SK-N-SH (cell line): ENCODE measurements at regions of chr11 and their contacts with region 1.

Region 1: DNA sequence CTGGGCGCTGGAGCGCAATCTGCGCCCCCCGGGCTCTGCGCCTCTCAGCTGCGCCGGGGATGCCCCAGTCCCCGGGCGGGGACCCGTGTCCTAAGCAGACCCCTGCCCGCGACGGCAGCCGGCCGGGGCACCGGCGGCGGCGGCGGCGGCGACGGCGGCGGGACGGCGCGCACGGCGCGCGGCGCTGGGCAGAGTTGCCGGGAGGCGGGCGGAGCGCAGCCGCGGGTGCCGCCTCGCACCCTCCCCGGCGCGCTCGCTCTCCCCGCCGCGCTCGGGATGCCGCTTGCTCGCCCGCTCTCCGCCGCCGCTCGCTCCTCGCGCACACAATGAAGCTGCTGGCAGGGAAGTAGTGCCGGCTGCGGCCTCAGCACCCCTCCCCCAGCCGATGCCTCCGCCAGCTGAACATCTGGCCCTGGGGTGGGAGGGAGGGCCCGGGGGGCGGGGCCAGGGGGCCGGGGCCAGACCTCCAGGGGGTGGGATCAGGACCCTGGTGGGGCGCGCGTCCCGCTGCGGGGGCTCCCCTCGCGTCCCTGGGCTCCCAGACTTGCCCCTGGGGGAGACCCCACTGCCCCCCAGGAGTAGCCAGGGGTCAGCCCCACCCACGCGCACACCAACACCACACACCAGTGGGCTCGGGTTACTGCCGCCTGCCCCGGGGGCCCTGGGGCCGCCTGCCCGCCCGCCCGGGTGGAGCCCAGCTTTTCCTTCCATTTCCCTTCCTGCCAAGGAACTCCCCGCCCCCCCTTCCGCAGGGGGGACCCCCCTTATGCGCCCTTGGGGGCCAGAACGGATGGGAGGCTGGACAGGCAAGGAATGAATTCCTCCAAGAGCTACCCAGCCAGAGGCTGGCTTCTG is at the start of gene RCOR2:
- DNase-seq: peak; percentile 98
- H3K4me3 ChIP-seq: peak within 1 kb of the TSS; percentile 58 to 64
- H3K27ac ChIP-seq: peak within 1 kb of the TSS in 1 of 2 experiments; percentile 98; a peak in 2 of 4 replicates
- H3K4me1 ChIP-seq: peaks cover 4 to 44% of the 10 kb centered on the region in 2 experiments; a peak in 3 of 4 replicates
- H3K27me3 ChIP-seq: no peaks in the 10 kb centered on the region
- CTCF ChIP-seq: no peak
- EP300 ChIP-seq: no peak
- RAD21 ChIP-seq: no peak
- polyA plus RNA-seq, gene RCOR2: 1.1 and 1.4 TPM in 2 replicates

Region 2: DNA sequence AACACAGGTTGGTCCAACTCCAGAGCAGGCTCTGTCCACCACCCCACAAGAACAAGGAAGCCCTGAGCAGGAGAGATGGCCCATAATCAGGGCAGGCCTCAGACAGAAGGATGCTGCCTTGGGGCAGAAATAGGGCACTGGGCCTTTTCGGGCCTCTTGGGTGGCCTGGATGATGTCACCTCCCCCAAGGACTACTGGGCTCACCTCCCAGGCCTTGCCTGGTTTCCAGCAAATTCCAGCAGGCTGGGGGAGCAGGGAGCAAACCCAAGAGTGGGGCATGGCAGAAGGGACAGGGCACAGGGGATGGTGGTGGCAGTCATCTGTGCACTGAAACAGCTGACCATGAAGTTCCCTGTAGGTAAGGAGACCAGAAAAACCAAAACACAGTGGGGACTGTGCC is 16.4 kb after region 1 on chr11:
- CTCF ChIA-PET with region 1: interaction called, 14 read pairs
- POLR2A ChIA-PET with region 1: interaction called, 7 read pairs
- DNase-seq: no peak
- H3K4me3 ChIP-seq: no peak overlapping the region
- H3K27ac ChIP-seq: no peak overlapping the region
- H3K4me1 ChIP-seq: peaks cover 3 to 4% of the 10 kb centered on the region in 2 experiments; a peak in 1 of 4 replicates
- H3K27me3 ChIP-seq: no peaks in the 10 kb centered on the region
- CTCF ChIP-seq: no peak
- EP300 ChIP-seq: no peak
- RAD21 ChIP-seq: no peak

Region 3: GRCh38 chr11:63938479-63939396 is 21.7 kb after region 1 on chr11 and contains the start of gene NAA40:
- CTCF ChIA-PET with region 1: interaction called, 113 read pairs
- POLR2A ChIA-PET with region 1: interaction called, 12 read pairs
- DNase-seq: peak; percentile 99
- H3K4me3 ChIP-seq: peak within 1 kb of the TSS; percentile 69 to 79
- H3K27ac ChIP-seq: peak within 1 kb of the TSS; percentile 67 to 82
- H3K4me1 ChIP-seq: peaks cover 12% of the 10 kb centered on the region in 2 experiments; a peak in 2 of 4 replicates
- H3K27me3 ChIP-seq: no peaks in the 10 kb centered on the region
- CTCF ChIP-seq: no peak
- EP300 ChIP-seq: no peak; a peak in 1 of 4 replicates
- RAD21 ChIP-seq: no peak; the same call in 1 of the 2 replicates
- polyA plus RNA-seq, gene NAA40: 33.0 and 36.3 TPM in 2 replicates

Region 4: DNA sequence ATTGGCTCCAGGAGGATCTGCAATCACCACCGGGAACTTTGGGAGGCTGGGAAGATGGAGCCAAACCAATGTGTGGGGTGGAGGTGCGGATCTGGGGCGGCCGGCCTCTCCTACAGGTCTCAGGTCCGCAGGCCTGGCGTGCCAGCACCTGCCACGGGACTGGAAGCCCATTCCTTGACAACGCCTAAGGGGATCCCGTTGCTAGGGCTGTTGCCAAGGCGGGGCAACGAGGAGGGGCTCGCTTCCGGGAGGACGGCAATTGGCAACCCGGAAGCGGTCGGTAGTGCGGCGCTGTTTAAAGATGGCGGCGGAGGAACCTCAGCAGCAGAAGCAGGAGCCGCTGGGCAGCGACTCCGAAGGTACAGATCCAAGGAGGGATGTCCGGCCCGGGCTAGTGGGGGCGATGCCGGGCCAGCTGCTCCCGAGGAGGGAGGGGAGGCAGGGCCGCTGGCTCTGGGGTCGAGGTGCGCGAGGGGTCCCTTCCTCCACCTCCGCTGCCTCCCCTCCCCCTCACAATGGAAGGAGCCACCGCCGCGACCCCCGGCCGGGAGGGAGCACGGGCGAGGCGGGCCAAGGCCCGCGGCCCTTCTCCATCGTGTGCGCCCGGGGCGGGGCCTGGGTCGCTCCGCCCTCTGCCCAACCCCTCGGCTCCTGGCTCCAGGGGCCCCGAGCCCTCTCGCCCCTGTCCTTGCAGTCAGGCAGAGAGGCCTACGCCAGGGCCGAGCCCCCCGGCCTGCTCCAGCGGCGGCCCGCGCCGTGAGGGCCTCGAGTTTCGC is 69.3 kb after region 1 on chr11 and contains the start of gene OTUB1:
- CTCF ChIA-PET with region 1: no interaction called
- POLR2A ChIA-PET with region 1: no interaction called
- DNase-seq: peak; percentile 97
- H3K4me3 ChIP-seq: peak within 1 kb of the TSS; percentile 79 to 93
- H3K27ac ChIP-seq: peak within 1 kb of the TSS; percentile 81 to 93
- H3K4me1 ChIP-seq: peaks cover 7 to 17% of the 10 kb centered on the region in 2 experiments
- H3K27me3 ChIP-seq: no peaks in the 10 kb centered on the region
- CTCF ChIP-seq: no peak
- EP300 ChIP-seq: no peak
- RAD21 ChIP-seq: no peak
- polyA plus RNA-seq, gene OTUB1: 183 and 195 TPM in 2 replicates

Region 5: GRCh38 chr11:64269380-64270234 is 352.5 kb after region 1 on chr11:
- CTCF ChIA-PET with region 1: no interaction called
- POLR2A ChIA-PET with region 1: no interaction called
- DNase-seq: peak; percentile 86
- H3K4me3 ChIP-seq: peak overlapping the region; percentile 60 to 76
- H3K27ac ChIP-seq: peak overlapping the region; percentile 97 to 99
- H3K4me1 ChIP-seq: peaks cover 12 to 42% of the 10 kb centered on the region in 2 experiments; a peak in 2 of 4 replicates
- H3K27me3 ChIP-seq: no peaks in the 10 kb centered on the region
- CTCF ChIP-seq: 0 out of 2 replicates have a peak, but pooled peaks have one; percentile 14
- EP300 ChIP-seq: no peak; a peak in 1 of 4 replicates
- RAD21 ChIP-seq: peak; percentile 44